ENCODE measurements at regions of chrX and their contacts with region 1.

Region 1: DNA sequence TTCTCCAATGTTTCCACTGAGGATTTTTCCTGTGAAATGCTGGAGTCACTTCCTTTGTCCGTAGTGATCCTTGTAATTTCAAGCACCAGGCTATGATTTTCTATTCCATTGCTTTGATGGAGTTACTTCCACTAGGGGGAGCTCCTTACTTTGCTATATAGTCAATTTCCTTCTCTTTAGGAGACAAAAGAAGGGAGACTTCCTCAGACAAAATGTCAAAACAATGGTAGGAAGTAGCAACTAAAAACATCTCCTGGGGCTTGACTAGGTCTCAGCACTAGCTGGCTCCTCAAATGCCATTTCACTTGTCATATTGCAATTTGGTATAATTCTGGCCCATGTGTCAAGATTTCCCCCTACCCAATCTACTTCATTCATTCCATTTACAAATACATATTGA is 24.1 kb downstream of the ZCCHC12 start:
- DNase-seq: no peak
- H3K4me3 Mint-ChIP-seq: no peak overlapping the region
- H3K27ac Mint-ChIP-seq: no peak overlapping the region
- H3K4me1 Mint-ChIP-seq: no peaks in the 10 kb centered on the region
- H3K27me3 Mint-ChIP-seq: no peaks in the 10 kb centered on the region

Region 2: DNA sequence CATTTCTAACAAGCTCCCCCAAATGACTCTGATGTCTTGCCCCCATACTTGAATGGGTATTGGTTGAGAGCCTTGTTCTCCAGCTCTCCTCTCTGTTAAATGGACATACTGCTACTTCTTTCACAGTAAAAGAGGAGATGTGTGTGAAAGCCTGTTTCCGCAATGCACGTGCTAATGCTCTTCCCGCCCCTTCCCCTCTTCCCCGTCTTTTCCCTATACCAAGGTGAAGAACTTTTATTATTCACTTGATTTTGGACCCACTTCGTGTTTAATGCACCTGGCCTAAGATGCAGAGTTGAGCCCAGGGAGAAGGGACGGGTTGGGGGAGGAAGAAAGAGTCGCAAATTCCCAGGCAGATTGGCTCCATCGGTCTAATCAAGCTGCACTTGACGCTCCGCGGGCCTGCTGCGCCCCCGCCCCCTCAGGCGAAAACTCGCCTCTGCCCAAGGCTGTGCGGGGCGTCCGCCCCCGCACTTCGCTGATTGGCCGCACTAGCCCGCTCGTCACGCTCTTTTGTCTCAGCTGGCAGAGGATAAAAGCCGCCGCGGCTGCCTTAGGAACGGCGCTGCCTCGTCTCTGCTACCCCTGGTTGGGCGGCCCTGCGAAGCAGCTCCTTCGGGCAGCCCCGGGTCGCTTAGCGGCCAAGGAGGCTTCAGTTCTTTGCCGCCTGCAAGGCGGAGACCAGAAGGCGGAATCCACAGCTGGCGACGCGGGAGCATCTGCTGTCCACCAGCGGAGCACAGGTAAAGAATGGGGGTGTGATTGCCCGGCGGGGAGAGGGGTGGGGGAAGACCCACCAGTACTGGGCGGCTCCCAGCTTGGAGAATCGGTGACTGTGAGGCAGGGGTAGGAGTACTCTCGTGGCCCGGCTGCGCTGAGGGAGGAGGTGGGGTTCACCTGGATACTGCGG is 24.2 kb before region 1 on chrX and contains the start of gene ZCCHC12:
- CTCF ChIA-PET with region 1: no interaction called
- POLR2A ChIA-PET with region 1: no interaction called
- DNase-seq: no peak
- H3K4me3 Mint-ChIP-seq: no peak within 1 kb of the TSS
- H3K27ac Mint-ChIP-seq: no peak within 1 kb of the TSS
- H3K4me1 Mint-ChIP-seq: peaks cover 8% of the 10 kb centered on the region
- H3K27me3 Mint-ChIP-seq: peaks cover 63% of the 10 kb centered on the region
- total RNA-seq, gene ZCCHC12: not detected

Region 3: GRCh38 chrX:119008118-119008744 is 160.6 kb after region 1 on chrX:
- CTCF ChIA-PET with region 1: interaction called, 18 read pairs
- POLR2A ChIA-PET with region 1: no interaction called
- DNase-seq: peak; percentile 31
- H3K4me3 Mint-ChIP-seq: no peak overlapping the region
- H3K27ac Mint-ChIP-seq: no peak overlapping the region
- H3K4me1 Mint-ChIP-seq: no peaks in the 10 kb centered on the region
- H3K27me3 Mint-ChIP-seq: no peaks in the 10 kb centered on the region